ENCODE measurements at regions of chr10 and their contacts with region 1.

Region 1: GRCh38 chr10:119650692-119651513 is at the start of gene BAG3:
- DNase-seq: peak; percentile 66 to 80 (median 68)
- H3K4me3 ChIP-seq: peak within 1 kb of the TSS; percentile 88 to 89
- H3K4me3 Mint-ChIP-seq: peak within 1 kb of the TSS; percentile 94 to 100 (median 96)
- H3K27ac ChIP-seq: peak within 1 kb of the TSS; percentile 87
- H3K27ac Mint-ChIP-seq: peak within 1 kb of the TSS; percentile 96 to 99 (median 96)
- H3K4me1 ChIP-seq: peaks cover 45% of the 10 kb centered on the region
- H3K4me1 Mint-ChIP-seq: peaks cover 36 to 45% (median 43%) of the 10 kb centered on the region in 4 donors
- H3K27me3 ChIP-seq: no peaks in the 10 kb centered on the region
- H3K27me3 Mint-ChIP-seq: peaks cover 0 to under 1% of the 10 kb centered on the region in 2 donors
- total RNA-seq, gene BAG3: 20.8 to 21.6 TPM

Region 2: DNA sequence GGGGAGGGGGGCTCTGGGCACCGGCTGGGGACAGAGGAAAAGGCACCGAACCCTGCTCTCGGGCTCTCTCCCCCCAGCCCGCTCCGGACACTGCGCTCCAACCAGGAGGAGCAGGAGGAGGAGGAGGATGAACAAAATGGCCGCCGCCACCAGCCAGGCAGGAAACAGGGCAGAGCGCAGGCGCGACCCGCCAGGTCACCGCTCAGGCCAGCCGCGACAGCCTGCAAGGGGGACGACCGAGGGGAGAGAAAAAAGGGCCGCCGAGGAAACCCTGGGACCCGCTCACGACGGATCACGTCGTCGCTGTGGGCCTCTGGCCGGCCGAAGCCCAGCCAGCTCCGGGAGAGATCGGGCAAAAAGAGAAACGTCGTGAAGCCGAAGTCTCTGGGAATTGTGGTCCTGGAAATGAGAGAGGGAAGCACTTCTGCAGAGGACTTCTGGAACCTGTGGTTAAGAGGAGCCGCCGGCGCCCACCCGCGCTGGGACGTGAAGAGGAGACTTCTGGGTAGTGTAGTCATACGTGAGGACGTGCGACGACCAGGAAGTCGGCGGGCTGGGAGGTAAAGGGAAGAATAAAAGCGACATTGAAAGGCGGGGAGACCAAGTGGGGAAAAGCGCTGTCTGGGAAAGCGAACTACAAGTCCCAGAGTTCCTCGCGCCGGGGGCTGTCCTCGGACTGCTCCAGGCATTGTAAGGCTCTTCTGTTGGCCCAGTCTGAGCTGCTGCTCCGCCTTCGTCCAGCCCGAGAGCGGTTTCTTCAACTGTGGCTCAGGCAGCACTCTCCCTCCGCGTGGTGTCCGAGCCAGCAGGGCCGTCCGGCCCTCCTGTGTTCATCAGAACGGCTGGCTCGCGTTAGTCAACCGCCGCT is 54.1 kb before region 1 on chr10 and contains the start of gene TIAL1:
- CTCF ChIA-PET with region 1: interaction called, 14 read pairs
- POLR2A ChIA-PET with region 1: interaction called, 13 read pairs
- intact Hi-C with region 1: loop called (anchors 1 kb)
- DNase-seq: peak; percentile 89 to 97 (median 91)
- H3K4me3 ChIP-seq: peak within 1 kb of the TSS; percentile 83 to 99
- H3K4me3 Mint-ChIP-seq: peak within 1 kb of the TSS; percentile 93 to 100 (median 99)
- H3K27ac ChIP-seq: peak within 1 kb of the TSS; percentile 98
- H3K27ac Mint-ChIP-seq: peak within 1 kb of the TSS; percentile 97 to 100 (median 99)
- H3K4me1 ChIP-seq: peaks cover 43% of the 10 kb centered on the region
- H3K4me1 Mint-ChIP-seq: peaks cover 37 to 57% (median 44%) of the 10 kb centered on the region in 4 donors
- H3K27me3 ChIP-seq: no peaks in the 10 kb centered on the region
- H3K27me3 Mint-ChIP-seq: no peaks in the 10 kb centered on the region
- total RNA-seq, gene TIAL1: 201 to 212 TPM

Region 3: GRCh38 chr10:119608316-119609155 is 42.4 kb before region 1 on chr10:
- CTCF ChIA-PET with region 1: interaction called, 5 read pairs
- POLR2A ChIA-PET with region 1: interaction called, 6 read pairs
- intact Hi-C with region 1: loop called (anchors 1 kb)
- DNase-seq: peak in 4 of 5 donors; percentile 19 to 28 (median 22)
- H3K4me3 ChIP-seq: no peak overlapping the region
- H3K4me3 Mint-ChIP-seq: peak overlapping the region in 4 of 8 donors; percentile 25 to 40 (median 30)
- H3K27ac ChIP-seq: no peak overlapping the region
- H3K27ac Mint-ChIP-seq: peak overlapping the region in 1 of 7 donors; percentile 27
- H3K4me1 ChIP-seq: no peaks in the 10 kb centered on the region
- H3K4me1 Mint-ChIP-seq: peaks cover 4 to 8% (median 6%) of the 10 kb centered on the region in 4 donors
- H3K27me3 ChIP-seq: no peaks in the 10 kb centered on the region
- H3K27me3 Mint-ChIP-seq: peaks cover 0 to 2% of the 10 kb centered on the region in 2 donors

Region 4: DNA sequence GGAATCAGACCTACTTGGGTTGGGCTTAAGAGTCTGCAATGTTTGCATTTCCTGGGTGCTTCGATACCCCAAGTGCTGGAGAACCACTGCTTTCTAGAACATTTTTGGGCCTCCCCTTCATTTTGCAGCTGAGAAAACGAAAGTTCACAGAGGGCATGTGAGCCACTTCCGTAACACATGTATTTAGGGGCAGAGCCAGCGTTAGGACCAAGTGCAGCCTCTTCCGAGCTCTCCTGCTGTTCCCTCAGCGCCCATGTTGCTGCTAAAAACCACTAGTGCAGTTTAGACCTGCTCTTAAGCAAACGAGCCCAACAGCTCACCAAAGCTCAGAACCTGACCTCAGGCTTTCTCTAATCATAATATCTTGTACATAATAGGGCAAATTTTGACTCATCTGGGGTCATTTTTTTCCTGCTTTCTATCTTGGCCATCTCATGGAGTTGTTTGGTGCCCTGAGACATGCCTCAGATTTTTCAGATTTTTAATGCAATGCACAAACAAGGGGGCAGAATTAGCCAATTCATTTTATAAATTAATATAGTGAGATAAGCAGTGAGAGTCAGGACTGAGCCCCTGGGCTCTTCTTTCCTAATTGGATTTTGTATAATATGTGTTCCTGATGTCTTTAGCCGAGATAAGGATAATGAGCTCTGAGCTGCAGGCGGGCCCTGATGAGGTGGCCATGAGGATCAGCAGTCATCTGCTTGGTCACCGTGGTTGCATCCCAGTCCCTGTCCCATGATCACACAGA is 13.1 kb after region 1 on chr10:
- CTCF ChIA-PET with region 1: interaction called, 16 read pairs
- POLR2A ChIA-PET with region 1: interaction called, 84 read pairs
- intact Hi-C with region 1: loop called (anchors 1 kb)
- DNase-seq: peak; percentile 65 to 78 (median 70)
- H3K4me3 ChIP-seq: peak overlapping the region; percentile 31 to 48
- H3K4me3 Mint-ChIP-seq: peak overlapping the region; percentile 75 to 91 (median 84)
- H3K27ac ChIP-seq: peak overlapping the region; percentile 64
- H3K27ac Mint-ChIP-seq: peak overlapping the region; percentile 90 to 98 (median 94)
- H3K4me1 ChIP-seq: peaks cover 40% of the 10 kb centered on the region
- H3K4me1 Mint-ChIP-seq: peaks cover 33 to 90% (median 48%) of the 10 kb centered on the region in 4 donors
- H3K27me3 ChIP-seq: no peaks in the 10 kb centered on the region
- H3K27me3 Mint-ChIP-seq: no peaks in the 10 kb centered on the region

Measured in CD4-positive, alpha-beta memory T cell (primary cell).